PC-3 (cell line): ENCODE measurements at regions of chr14 and their contacts with region 1.

Region 1: DNA sequence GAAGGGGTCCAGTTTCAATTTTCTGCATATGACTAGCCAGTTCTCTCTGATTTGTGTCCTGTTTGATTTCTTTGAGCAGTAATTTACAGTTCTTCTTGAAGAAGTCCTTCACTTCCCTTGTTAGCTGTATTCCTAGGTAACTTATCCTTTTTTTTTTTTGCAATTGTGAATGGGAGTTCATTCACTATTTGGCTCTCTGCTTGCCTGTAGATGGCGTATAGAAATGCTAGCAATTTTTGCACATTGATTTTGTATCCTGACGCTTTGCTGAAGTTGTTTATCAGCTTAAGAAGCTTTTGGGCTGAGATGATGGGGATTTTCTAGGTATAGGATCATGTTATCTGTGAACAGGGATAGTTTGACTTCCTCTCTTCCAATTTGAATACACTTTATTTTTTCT is 77.6 kb upstream of the NID2 start:
- DNase-seq: peak; percentile 24
- ATAC-seq: peak; percentile 42
- H3K4me3 ChIP-seq: no peak overlapping the region
- H3K27ac ChIP-seq: no peak overlapping the region
- H3K4me1 ChIP-seq: no peaks in the 10 kb centered on the region
- H3K27me3 ChIP-seq: 0 out of 2 replicates have a peak, but pooled peaks cover 5% of the 10 kb centered on the region
- CTCF ChIP-seq: peak; percentile 61

Region 2: GRCh38 chr14:51472881-51473280 is 673.6 kb before region 1 on chr14:
- CTCF ChIA-PET with region 1: no interaction called
- POLR2A ChIA-PET with region 1: interaction called, 13 read pairs
- intact Hi-C with region 1: no loop called
- DNase-seq: no peak
- ATAC-seq: no peak
- H3K4me3 ChIP-seq: no peak overlapping the region
- H3K27ac ChIP-seq: peak overlapping the region; percentile 69
- H3K4me1 ChIP-seq: peaks cover 26% of the 10 kb centered on the region
- H3K27me3 ChIP-seq: no peaks in the 10 kb centered on the region
- CTCF ChIP-seq: no peak

Region 3: GRCh38 chr14:52272375-52272774 is 125.9 kb after region 1 on chr14:
- CTCF ChIA-PET with region 1: no interaction called
- POLR2A ChIA-PET with region 1: no interaction called
- intact Hi-C with region 1: loop called (anchors 1 kb)
- DNase-seq: peak; percentile 80
- ATAC-seq: peak; percentile 85
- H3K4me3 ChIP-seq: no peak overlapping the region
- H3K27ac ChIP-seq: no peak overlapping the region
- H3K4me1 ChIP-seq: no peaks in the 10 kb centered on the region; the same call in 1 of the 2 replicates
- H3K27me3 ChIP-seq: peaks cover 23% of the 10 kb centered on the region
- CTCF ChIP-seq: peak; percentile 75

Region 4: DNA sequence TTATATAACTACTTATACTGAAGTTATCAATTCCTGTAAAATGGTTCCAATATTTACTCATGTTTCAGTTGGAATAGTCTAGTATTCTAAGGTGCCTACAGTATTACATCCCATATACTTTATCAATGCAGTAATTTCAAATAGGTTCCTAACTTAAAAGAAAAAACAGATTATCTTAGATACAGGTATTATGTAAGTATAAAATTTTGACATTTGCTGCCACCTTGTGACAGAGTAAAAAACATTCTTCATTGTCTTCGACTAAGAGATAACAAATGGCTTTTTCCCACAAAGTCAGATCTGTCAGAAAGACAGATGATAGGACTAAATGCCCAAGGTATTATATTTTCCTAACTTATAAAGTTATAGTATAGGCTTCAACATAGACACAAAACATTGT is 327.1 kb after region 1 on chr14:
- CTCF ChIA-PET with region 1: no interaction called
- POLR2A ChIA-PET with region 1: no interaction called
- intact Hi-C with region 1: loop called (anchors 1 kb)
- DNase-seq: peak; percentile 78
- ATAC-seq: peak; percentile 79
- H3K4me3 ChIP-seq: no peak overlapping the region
- H3K27ac ChIP-seq: no peak overlapping the region
- H3K4me1 ChIP-seq: no peaks in the 10 kb centered on the region
- H3K27me3 ChIP-seq: no peaks in the 10 kb centered on the region
- CTCF ChIP-seq: peak; percentile 83

Region 5: GRCh38 chr14:52974406-52974805 is 827.9 kb after region 1 on chr14:
- CTCF ChIA-PET with region 1: no interaction called
- POLR2A ChIA-PET with region 1: no interaction called
- intact Hi-C with region 1: no loop called
- DNase-seq: peak; percentile 54
- ATAC-seq: peak; percentile 83
- H3K4me3 ChIP-seq: no peak overlapping the region
- H3K27ac ChIP-seq: no peak overlapping the region
- H3K4me1 ChIP-seq: 0 out of 2 replicates have a peak, but pooled peaks cover 8% of the 10 kb centered on the region
- H3K27me3 ChIP-seq: no peaks in the 10 kb centered on the region
- CTCF ChIP-seq: no peak